Panc1 (cell line): ENCODE measurements at regions of chr4 and their contacts with region 1.

Region 1: GRCh38 chr4:169612871-169613859 is 782 bp upstream of the NEK1 start:
- DNase-seq: peak; percentile 60
- ATAC-seq: peak; percentile 76
- H3K4me3 ChIP-seq: peak overlapping the region; percentile 88 to 93
- H3K27ac ChIP-seq: peak overlapping the region; percentile 75; the same call in 1 of the 2 replicates
- H3K4me1 ChIP-seq: peaks cover 4% of the 10 kb centered on the region; the same call in 1 of the 2 replicates
- H3K27me3 ChIP-seq: no peaks in the 10 kb centered on the region
- CTCF ChIP-seq: peak; percentile 81

Region 2: DNA sequence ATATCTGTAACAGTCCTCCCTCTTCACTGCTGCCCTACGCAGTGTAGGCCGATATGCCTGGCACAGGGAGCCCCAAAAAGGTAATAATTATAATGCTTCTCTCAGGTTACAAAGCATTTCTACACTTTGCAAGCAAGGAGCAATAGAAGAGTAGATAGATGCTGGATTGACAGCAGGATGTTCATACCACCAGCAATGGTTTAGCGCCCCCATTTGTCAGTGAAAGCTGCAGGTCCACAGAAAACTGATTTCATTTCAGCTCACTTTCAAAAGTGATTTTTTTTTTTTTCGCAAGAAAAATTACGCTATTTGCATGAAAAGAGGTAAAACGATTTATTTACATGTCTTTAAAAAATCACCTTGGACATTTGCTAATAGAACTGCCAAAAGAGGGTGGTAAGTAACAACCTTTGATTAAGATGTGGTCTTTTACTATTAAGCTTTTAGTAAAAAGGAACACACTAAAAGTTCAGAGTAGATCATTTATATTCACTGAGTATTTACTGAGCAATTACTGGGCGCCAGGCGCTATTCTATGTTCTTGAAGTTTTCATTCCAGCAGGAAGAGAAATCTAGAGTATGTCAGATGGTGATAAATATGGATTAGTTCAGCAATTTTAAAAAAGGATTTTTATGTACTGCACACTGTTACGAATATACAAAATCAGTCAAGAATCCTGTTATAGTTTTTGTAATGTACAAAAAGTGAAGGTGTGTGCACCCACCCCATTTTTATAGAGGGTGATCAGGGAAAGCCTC is 110.2 kb after region 1 on chr4:
- CTCF ChIA-PET with region 1: interaction called, 5 read pairs
- POLR2A ChIA-PET with region 1: no interaction called
- in situ Hi-C with region 1: no loop called
- intact Hi-C with region 1: loop called (anchors 2 kb)
- DNase-seq: no peak
- ATAC-seq: no peak
- H3K4me3 ChIP-seq: no peak overlapping the region
- H3K27ac ChIP-seq: no peak overlapping the region
- H3K4me1 ChIP-seq: no peaks in the 10 kb centered on the region
- H3K27me3 ChIP-seq: no peaks in the 10 kb centered on the region
- CTCF ChIP-seq: peak; percentile 41; the same call in 1 of the 2 replicates

Region 3: DNA sequence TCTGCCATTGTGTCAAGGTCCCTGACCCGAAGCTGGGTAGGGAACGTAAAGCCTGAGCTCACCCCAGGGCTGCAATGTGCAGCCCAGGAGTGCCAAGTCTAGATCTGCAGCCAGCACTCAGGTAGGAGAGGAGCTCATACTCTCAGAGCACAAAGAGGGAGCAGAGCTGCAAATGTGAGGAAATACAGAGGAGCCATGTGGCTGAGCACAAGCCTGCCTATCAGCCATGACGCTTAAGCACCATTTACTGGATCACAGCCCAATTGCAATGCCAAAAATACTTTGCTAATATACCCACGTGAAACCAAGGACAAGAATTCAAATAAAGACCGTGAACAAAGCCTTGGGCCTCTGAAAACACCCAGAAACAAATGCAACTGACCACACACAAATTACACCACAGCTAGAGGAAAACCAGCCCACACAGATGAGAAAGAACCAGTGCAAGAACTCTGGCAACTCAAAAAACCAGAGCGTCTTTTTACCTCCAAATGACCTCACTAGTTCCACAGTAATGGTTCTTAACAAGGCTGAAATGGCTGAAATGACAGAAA is 213.5 kb after region 1 on chr4:
- CTCF ChIA-PET with region 1: no interaction called
- POLR2A ChIA-PET with region 1: interaction called, 19 read pairs
- in situ Hi-C with region 1: no loop called
- intact Hi-C with region 1: no loop called
- DNase-seq: no peak
- ATAC-seq: no peak
- H3K4me3 ChIP-seq: no peak overlapping the region
- H3K27ac ChIP-seq: no peak overlapping the region
- H3K4me1 ChIP-seq: no peaks in the 10 kb centered on the region
- H3K27me3 ChIP-seq: no peaks in the 10 kb centered on the region
- CTCF ChIP-seq: no peak